ENCODE measurements at regions of chr15 and their contacts with region 1.

Region 1: DNA sequence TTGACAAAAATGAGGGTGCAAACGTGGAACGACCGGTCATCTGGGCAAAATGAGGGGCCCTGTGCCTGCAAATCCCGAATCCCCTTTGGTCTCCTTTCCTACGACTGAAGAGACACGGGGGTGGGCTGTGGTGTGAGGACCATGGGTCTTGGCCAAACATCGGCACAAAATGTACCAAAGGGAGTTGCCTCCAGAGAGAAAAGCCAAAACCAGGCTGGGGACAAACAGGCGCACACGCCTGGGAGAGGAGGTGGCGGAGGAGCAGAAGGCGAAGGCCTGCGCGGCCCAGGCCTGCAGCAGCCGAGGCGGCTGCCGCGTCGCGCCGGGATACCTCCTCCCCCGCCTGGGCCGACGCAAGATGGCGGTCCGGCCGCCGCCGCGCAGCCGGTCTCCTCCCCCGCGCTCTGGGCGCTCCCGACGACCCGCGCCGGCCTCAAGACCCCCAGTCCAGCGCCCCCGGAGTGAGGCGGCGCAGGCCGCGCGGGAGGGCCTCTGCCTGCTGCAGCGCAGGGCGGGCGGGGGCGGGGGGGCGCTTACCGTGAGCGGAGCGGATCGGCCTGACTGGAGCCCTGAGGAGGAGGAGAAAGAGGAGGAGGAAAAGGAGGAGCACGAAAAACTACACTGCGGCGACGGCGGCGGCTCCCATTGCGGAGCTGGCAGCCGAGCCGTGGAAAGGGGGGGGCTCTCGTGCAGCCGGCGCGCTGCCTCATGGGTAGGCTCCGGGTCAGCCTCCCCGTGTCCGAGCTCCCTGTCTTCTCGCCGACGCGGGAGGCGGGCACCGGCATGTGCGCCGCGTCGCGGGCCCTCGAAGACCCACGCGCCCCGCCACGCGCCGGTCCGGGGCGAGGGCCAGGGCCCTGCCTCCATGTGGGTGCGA is at the start of gene ZNF280D:
- DNase-seq: peak; percentile 96
- ATAC-seq: peak; percentile 96
- total RNA-seq, gene ZNF280D: 20.8 TPM

Region 2: DNA sequence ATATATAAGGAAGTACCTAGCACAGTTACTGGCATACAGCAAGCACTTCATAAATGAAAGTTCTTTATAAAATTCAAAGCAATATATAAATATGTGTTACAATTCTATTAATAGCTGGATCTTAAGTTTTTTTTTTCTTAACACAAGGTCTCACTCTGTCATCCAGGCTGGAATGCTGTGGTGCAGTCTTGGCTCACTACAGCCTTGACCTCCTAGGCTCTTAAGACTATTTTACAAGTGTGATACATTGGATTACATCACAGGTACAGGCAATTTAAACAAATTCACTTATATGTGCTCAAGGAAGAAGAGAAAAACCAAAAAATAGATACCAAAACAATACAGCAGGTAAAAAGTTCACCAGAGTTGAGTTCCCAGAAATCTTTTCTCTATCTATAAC is 60.4 kb before region 1 on chr15:
- intact Hi-C with region 1: loop called (anchors 10 kb)
- DNase-seq: no peak
- ATAC-seq: no peak

Region 3: GRCh38 chr15:56813995-56814394 is 80.8 kb after region 1 on chr15:
- intact Hi-C with region 1: loop called (anchors 5 kb)
- DNase-seq: no peak
- ATAC-seq: peak; percentile 58

Region 4: DNA sequence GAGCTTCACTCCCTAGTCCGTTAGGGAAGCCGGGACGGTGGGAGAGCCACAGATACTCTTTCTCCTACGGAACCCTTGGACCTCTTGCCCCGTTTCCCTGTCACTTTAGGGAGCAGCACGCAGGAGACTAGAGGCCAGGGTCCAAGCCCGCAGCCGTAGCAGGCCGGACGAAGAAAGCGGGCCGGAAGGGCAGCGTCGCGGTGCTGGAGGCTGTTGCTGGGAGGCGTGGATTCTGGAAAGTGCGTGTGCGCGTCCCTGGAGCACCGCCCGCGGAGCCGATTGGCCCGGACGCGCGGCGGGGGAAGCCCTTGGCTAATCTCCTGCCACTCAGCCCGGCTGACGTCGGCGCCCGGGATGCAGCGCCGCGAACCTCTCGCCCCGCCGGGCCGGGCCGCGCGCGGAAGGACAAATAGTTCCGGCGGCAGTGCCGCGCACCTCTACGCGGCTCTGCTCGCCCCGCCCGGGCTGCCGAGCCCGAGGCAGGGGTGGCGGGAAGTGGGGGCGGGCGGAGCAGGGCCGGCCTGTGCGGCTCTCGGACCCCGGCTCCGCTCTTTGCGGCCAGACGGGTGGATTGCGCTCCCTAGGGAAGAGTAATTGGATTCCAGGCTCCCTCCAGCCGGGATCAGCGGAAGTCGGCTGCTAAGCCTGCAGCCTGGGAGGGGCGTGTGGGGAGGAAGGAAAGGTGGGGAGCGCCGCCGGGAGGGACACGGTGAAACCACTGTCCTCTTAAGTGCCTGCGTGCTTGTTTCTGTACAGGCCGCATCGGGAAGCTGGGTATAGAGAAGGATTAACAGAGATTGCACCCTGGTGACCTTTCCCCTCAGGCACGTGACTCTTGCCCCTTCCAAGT is 154.0 kb after region 1 on chr15:
- intact Hi-C with region 1: loop called (anchors 1 kb)
- DNase-seq: peak; percentile 97
- ATAC-seq: peak; percentile 98

Measured in Right ventricle myocardium inferior (tissue), 1 donor.